Calu3 (cell line): ENCODE measurements at regions of chr4 and their contacts with region 1.

Region 1: GRCh38 chr4:105631818-105632400 is 76.6 kb downstream of the INTS12 start:
- DNase-seq: no peak
- H3K4me3 Mint-ChIP-seq: no peak overlapping the region
- H3K27ac Mint-ChIP-seq: no peak overlapping the region
- H3K4me1 Mint-ChIP-seq: peaks cover 38% of the 10 kb centered on the region
- H3K27me3 Mint-ChIP-seq: no peaks in the 10 kb centered on the region
- CTCF ChIP-seq: no peak

Region 2: DNA sequence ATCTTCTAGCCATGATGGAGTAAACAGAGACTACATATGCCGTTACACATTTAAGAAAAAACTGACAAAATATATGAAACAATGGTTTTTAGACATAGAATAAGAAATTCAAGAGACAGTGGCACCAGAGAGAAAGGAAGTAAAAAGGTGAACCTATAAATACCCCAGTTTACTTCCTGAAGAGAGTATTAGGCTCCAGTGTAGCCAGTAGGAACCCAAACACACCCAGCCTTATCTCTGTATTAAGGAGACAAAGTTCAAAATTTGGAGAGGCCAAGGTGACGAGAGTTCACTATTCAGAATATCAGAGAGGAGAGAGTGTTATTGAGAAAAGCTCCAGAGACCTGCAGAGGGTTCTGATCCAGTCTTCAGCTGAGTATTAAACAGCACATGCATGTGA is 366.2 kb before region 1 on chr4:
- CTCF ChIA-PET with region 1: no interaction called
- intact Hi-C with region 1: no loop called
- DNase-seq: no peak
- H3K4me3 Mint-ChIP-seq: no peak overlapping the region
- H3K27ac Mint-ChIP-seq: no peak overlapping the region
- H3K4me1 Mint-ChIP-seq: no peaks in the 10 kb centered on the region
- H3K27me3 Mint-ChIP-seq: no peaks in the 10 kb centered on the region
- CTCF ChIP-seq: no peak

Region 3: GRCh38 chr4:105586638-105587328 is 45.1 kb before region 1 on chr4:
- CTCF ChIA-PET with region 1: interaction called, 4 read pairs
- intact Hi-C with region 1: loop called (anchors 1 kb)
- DNase-seq: no peak
- H3K4me3 Mint-ChIP-seq: peak overlapping the region; percentile 51
- H3K27ac Mint-ChIP-seq: peak overlapping the region; percentile 54
- H3K4me1 Mint-ChIP-seq: peaks cover 46% of the 10 kb centered on the region
- H3K27me3 Mint-ChIP-seq: no peaks in the 10 kb centered on the region
- CTCF ChIP-seq: no peak

Region 4: GRCh38 chr4:105989485-105990242 is 357.8 kb after region 1 on chr4:
- CTCF ChIA-PET with region 1: no interaction called
- intact Hi-C with region 1: loop called (anchors 5 kb)
- DNase-seq: no peak
- H3K4me3 Mint-ChIP-seq: no peak overlapping the region
- H3K27ac Mint-ChIP-seq: no peak overlapping the region
- H3K4me1 Mint-ChIP-seq: peaks cover 16% of the 10 kb centered on the region
- H3K27me3 Mint-ChIP-seq: no peaks in the 10 kb centered on the region
- CTCF ChIP-seq: no peak